Activated CD8-positive, alpha-beta T cell treated with anti-CD3 and anti-CD28 coated beads, Interleukin-2, amount 10 ng/mL, durations not matched to agents 7 days and 5 days (primary cell): ENCODE measurements at regions of chr12 and their contacts with region 1.

Region 1: DNA sequence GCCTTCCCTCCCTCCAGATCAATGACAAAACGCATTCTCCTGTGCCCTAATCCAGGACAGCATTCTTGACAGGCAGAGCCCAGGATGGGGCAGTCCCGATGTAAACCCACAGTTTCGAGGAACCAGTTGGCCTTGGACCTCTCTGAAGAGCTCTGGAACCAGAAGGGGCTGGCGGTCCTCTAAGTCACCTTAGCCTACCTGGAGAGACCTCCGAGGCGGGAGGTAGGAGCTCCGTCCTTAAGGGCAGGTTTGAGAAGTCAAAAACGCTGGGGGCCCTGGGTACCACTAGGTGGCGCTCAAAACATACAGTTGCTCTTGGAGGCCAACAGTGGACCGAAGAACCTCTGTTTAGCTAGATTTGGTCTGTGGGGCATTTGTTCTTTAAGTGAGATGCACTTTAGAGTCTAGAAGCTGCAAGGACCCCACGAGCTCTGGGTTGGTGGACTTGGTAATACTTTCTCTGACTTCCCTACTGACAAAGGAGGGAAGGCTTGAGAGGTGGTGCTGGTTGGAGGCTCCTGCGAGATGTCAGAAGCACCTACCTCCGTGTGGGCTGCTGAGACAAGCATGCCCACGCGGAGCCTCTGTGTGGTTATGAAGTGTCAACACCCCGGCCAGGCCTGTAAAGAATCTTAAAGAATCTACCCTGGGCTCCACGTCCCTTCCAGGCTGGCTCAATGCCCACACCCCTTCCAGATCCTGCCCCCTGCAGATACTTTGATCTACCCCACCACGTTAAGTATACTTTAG is 74.8 kb upstream of the CHST11 start:
- DNase-seq: peak; percentile 90
- ATAC-seq: peak; percentile 90
- H3K4me3 Mint-ChIP-seq: no peak overlapping the region
- H3K27ac Mint-ChIP-seq: no peak overlapping the region
- H3K4me1 Mint-ChIP-seq: peaks cover 18% of the 10 kb centered on the region
- H3K27me3 Mint-ChIP-seq: peaks cover 9% of the 10 kb centered on the region

Region 2: DNA sequence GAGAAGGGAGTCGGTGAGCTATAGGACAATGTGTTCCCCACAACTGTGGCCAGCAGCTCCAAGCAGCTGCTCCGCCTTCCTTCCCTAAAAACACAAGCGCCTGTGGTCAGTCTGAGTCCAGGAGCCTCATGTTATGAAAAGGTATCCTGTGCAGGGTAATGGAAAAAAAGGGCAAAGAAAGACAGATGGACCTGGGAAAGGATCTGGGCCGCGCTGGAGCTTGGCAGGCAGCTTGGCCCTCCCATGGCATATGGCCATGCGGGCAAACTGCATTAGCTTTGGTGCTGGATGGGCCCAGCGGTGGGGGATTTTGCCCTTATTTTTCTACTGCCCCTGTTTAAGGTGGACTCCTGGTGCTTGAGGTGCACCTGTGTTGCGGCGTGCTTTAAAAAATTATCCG is 51.2 kb after region 1 on chr12:
- CTCF ChIA-PET with region 1: interaction called, 10 read pairs
- POLR2A ChIA-PET with region 1: no interaction called
- DNase-seq: no peak
- ATAC-seq: no peak
- H3K4me3 Mint-ChIP-seq: no peak overlapping the region
- H3K27ac Mint-ChIP-seq: no peak overlapping the region
- H3K4me1 Mint-ChIP-seq: peaks cover 5% of the 10 kb centered on the region
- H3K27me3 Mint-ChIP-seq: peaks cover 20% of the 10 kb centered on the region

Region 3: GRCh38 chr12:104485651-104486362 is 103.9 kb after region 1 on chr12:
- CTCF ChIA-PET with region 1: interaction called, 16 read pairs
- POLR2A ChIA-PET with region 1: no interaction called
- DNase-seq: peak; percentile 79
- ATAC-seq: peak; percentile 91
- H3K4me3 Mint-ChIP-seq: peak overlapping the region; percentile 55
- H3K27ac Mint-ChIP-seq: peak overlapping the region; percentile 85
- H3K4me1 Mint-ChIP-seq: peaks cover 92% of the 10 kb centered on the region
- H3K27me3 Mint-ChIP-seq: no peaks in the 10 kb centered on the region

Region 4: DNA sequence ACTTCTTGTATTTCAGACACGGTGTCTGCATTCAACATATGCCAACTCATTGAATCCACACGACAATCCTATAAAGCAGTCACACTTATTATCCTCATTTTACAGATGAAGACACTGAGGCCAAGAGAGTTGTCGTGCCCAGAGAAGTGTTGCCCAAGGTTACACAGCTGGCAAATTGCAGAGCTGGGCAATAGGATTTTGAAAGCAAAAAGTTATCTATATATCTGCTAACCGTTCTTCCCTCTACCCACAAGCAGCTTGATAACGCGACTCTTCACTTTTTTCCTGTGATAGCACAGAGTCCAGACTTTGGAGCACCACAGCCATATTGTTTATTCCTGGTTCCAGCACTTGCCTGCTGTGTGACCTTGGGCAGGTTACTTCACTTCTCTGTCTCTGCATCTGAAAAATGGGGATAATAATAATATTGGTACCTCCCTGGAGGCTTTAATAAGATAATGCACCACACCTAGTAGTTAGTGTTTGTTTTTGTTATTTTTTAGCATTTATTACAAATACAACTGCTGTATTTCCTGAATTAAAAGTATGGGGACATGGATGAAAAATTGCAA is 157.1 kb after region 1 on chr12:
- CTCF ChIA-PET with region 1: interaction called, 10 read pairs
- POLR2A ChIA-PET with region 1: no interaction called
- DNase-seq: no peak
- ATAC-seq: no peak
- H3K4me3 Mint-ChIP-seq: no peak overlapping the region
- H3K27ac Mint-ChIP-seq: no peak overlapping the region
- H3K4me1 Mint-ChIP-seq: peaks cover 39% of the 10 kb centered on the region
- H3K27me3 Mint-ChIP-seq: no peaks in the 10 kb centered on the region

Region 5: GRCh38 chr12:104662203-104662602 is 280.3 kb after region 1 on chr12:
- CTCF ChIA-PET with region 1: interaction called, 11 read pairs
- POLR2A ChIA-PET with region 1: no interaction called
- DNase-seq: no peak
- ATAC-seq: no peak
- H3K4me3 Mint-ChIP-seq: no peak overlapping the region
- H3K27ac Mint-ChIP-seq: no peak overlapping the region
- H3K4me1 Mint-ChIP-seq: peaks cover 18% of the 10 kb centered on the region
- H3K27me3 Mint-ChIP-seq: no peaks in the 10 kb centered on the region

Region 6: GRCh38 chr12:104877123-104877705 is 495.3 kb after region 1 on chr12:
- CTCF ChIA-PET with region 1: interaction called, 10 read pairs
- POLR2A ChIA-PET with region 1: no interaction called
- DNase-seq: peak; percentile 58
- ATAC-seq: peak; percentile 64
- H3K4me3 Mint-ChIP-seq: no peak overlapping the region
- H3K27ac Mint-ChIP-seq: no peak overlapping the region
- H3K4me1 Mint-ChIP-seq: peaks cover 11% of the 10 kb centered on the region
- H3K27me3 Mint-ChIP-seq: peaks cover 22% of the 10 kb centered on the region